ENCODE measurements at regions of chr17 and their contacts with region 1.

Region 1: DNA sequence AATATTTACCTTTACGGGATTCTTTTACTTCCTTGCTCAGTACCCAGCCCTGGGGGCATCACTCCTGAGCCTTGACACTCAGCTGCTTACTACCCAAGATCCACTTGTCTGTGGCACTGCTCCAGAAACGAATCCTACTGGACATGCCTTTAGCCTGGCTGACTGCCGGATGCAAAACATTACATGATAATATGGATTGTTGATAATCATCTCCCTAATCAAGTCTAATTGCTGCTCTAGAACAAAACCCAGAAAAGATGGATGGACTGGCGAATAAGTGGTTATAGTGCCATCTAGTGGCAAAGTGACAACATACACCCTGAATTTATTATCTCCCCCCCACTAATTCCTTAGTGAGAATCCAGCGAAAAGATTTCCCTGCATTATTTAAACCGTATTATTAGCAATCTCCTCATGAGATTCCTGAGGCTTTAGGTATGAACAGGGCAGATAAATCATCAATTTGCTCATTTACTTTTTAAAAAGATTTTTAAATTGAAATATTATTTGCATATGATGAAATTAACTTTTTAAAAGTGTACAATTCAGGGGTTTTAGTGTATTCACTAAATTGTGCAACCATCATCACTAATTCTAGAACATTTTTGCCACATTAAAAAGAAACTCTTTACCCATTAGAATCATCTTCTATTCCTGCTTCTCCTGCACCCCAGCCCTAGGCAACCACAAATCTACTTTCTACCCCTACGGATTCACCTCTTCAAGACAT is 61.6 kb downstream of the RGS9 start:
- DNase-seq: no peak
- H3K4me3 ChIP-seq: no peak overlapping the region
- H3K27ac ChIP-seq: no peak overlapping the region
- H3K4me1 ChIP-seq: peaks cover 0 to 6% (median 0%) of the 10 kb centered on the region in 3 donors
- H3K27me3 ChIP-seq: no peaks in the 10 kb centered on the region
- CTCF ChIP-seq: peak; percentile 57 to 84 (median 74)
- POLR2A ChIP-seq: no peak

Region 2: DNA sequence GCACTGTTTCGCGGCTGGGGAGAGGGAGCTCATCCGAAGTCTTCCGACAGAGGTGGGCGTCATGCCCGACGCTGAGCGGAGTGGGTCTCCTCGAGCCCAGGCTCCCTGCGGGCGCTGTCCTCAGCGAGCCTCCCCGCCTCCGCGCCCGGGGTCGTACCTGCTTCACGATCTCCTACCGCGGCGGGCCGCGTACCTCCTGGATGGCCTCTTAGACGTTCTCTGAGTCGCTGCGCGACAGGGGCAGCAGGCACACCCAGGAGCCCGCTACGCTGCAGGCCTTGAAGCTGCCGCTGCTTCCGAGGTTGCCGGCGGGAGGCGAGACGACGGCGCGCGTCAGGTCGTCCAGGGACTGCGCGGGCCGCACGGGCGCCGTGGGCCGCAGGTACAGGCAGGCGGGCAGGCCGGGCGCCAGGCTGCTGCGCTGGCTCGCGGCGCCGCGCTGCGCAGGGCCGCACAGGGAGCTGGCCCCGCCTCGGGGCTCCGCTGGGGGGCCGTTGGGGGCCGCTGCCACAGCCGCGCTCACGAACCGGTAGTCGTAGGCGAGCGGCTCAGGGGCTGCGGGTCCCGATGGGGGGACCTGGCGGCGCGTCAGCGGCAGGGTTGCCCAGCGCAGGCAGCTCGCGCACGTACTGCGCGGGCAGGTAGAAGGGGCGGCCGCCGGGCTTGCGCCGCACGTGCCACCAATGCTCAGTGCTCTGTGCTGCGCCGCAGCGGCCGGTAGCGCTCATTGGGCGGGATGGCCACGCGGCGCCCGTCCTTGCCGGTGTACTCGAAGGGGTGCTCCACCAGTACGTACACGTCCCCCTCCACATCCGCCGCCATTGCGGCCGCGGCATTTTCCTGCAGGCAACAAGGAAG is 420.3 kb before region 1 on chr17:
- intact Hi-C with region 1: loop called (anchors 5 kb)
- DNase-seq: no peak
- H3K4me3 ChIP-seq: peak overlapping the region; percentile 23 to 65 (median 58)
- H3K27ac ChIP-seq: peak overlapping the region; percentile 38 to 90 (median 87)
- H3K4me1 ChIP-seq: peaks cover 58 to 83% (median 59%) of the 10 kb centered on the region in 3 donors
- H3K27me3 ChIP-seq: peaks cover 0 to 55% (median 0%) of the 10 kb centered on the region in 4 donors
- CTCF ChIP-seq: no peak
- POLR2A ChIP-seq: peak in 1 of 4 donors; percentile 11

Region 3: DNA sequence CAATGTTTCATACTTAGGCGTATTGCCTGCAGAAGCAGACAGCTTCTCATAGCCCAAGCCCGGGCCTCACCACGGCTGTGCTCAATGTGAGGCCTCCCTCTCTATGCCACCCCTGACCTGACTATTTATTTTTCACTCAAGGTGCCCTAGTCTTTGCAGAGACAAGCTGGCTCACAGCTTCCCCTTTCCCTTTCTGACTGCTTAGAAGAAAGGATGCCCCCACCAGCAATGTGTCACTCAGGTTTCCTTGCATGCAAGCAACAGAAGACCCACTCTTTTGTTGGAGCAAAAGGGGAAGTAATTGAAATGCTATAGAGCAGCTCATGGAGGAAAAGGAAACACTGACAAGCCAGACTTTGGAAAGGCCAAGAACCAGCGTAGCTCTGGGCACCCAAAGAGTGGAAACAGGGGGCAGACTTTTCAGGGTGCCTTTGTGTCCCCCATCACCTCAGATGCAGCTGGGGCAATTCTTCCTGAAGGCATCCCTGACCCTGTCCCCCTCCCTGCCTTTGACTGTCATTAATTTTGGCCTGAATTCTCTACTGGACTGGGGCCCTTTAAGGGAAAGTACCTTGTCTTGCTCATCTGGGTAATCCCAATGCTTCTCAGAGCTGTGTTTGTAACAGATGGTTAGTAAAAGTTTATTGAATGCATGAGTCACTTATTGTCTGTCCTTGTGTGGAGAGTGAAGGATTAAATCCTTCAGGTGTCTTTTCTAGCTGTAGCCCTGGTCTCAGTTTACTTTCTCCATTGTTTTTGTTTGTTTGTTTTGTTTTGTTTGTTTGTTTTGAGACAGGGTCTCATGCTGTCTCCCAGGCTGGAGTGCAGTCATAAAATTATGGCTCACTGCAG is 43.8 kb before region 1 on chr17:
- intact Hi-C with region 1: loop called (anchors 5 kb)
- DNase-seq: no peak
- H3K4me3 ChIP-seq: no peak overlapping the region
- H3K27ac ChIP-seq: no peak overlapping the region
- H3K4me1 ChIP-seq: peaks cover 0 to 4% (median 0%) of the 10 kb centered on the region in 3 donors
- H3K27me3 ChIP-seq: peaks cover 0 to 20% (median 0%) of the 10 kb centered on the region in 4 donors
- CTCF ChIP-seq: no peak
- POLR2A ChIP-seq: no peak

Measured in esophagus squamous epithelium (tissue), 5 donors.